Endothelial cell of umbilical vein (primary cell): ENCODE measurements at regions of chrX and their contacts with region 1.

Region 1: DNA sequence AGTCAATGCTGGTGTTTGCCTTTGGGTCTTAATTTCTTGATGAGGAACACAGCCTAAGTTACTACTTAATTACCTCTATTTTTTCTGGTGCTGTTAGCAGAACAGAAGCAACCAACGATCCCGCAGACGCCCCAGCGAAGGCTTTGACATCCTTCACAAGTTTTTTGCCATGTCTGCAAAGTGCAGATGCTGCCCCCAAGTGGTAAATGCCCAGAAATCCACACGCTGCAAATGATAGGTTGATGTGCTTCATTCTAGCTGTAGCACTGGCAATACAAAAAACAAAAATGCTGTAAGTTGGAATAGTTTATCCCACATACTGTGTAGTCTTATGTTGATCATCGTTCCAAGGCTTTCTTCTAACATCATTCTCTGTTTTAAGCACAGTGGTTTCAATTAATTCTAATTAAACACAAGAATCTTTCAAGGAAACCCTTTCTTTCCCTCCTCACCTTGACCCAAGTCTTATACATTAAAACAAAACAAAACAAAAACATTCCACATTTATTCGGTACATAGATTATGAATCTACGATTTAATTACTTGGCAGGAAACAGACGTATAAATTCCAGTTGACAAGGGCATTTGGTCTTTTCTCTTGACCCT is 1.2 kb downstream of the PNPLA4 start:
- DNase-seq: peak; percentile 51
- H3K4me3 ChIP-seq: no peak overlapping the region
- H3K27ac ChIP-seq: no peak overlapping the region
- H3K4me1 ChIP-seq: peaks cover 5% of the 10 kb centered on the region
- H3K27me3 ChIP-seq: no peaks in the 10 kb centered on the region
- CTCF ChIP-seq: peak; percentile 56 to 65
- POLR2A ChIP-seq: no peak

Region 2: DNA sequence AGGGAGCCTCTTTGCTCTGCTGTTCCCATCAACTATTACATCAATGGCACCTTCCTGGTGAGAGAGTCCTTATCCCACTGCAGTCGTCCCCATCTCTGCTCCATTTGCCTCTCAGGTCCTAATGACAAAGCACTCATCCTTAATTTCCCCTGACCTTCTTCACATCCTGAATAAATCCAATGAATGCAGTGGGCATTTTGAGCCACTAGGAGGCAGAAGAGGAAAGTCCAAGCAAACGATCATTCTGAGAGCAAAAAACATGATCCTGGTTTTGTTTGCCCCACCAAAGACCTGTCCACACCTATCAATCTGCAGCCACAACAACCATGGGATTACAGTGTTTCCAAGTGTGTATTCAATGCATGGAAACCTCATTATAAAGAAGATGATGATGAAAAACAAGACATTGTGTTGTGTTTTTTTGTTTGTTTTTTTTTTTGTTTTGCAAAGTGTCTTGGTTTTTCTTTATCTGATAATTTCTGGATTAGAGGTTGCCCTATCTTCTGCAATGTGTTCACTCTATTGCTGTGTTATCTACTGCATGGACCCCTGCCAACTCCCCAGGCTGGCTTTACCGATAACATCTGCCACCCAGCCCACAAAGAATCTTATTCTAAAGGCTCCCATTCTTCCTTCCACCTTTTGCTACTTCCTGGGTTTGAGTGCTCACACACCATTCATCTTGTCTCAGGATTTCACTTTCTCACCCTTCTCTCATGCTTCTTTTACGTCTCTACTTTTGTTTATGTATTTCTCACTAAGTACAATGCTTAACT is 1904.5 kb before region 1 on chrX:
- CTCF ChIA-PET with region 1: no interaction called
- POLR2A ChIA-PET with region 1: no interaction called
- dilution Hi-C with region 1: no loop called
- intact Hi-C with region 1: loop called (anchors 2 kb)
- DNase-seq: no peak
- H3K4me3 ChIP-seq: no peak overlapping the region
- H3K27ac ChIP-seq: no peak overlapping the region
- H3K4me1 ChIP-seq: no peaks in the 10 kb centered on the region
- H3K27me3 ChIP-seq: no peaks in the 10 kb centered on the region
- CTCF ChIP-seq: peak in 1 of 2 donors; percentile 13
- POLR2A ChIP-seq: no peak

Region 3: DNA sequence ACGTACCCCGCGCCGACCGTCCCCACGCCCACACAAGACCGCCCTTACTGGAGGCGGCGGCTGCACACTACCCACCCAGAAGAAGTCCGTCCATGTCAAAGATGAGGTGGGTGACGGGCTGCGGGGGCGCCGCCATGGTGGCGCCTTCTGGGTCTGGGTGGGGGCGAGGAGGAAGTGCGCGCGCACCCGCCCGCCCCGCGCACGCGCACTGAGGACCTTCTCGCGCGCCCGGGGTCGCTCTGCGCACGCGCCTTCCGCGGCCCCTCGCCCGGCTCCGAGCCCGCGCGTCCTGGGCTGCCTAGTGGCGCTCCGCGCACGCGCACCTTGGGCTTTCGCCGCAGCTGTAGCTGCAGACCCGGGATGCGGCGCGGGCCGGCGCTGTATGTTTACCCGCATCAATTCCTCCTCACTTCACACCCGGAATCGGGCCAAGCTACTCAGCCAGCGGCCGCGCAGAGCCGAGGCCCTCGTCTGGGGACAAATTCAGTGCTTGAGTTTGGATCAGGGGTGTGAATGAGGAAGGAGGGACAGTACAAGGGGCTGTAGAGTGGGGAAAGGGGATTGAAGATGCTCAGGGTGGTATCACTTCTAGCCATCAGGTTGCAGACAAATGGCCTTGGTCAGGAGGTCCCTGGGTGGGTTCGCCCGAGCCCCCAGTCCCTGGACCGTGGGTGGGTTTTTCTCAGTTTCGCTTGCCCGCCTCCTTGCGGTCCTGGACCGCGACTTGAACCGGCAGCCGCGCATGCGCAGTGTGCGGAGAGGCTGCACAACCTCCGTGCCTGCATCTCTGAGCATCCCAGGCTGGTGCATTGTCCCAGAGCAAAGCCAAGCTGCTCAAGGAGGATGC is 777.8 kb before region 1 on chrX and contains the start of gene PUDP:
- CTCF ChIA-PET with region 1: no interaction called
- POLR2A ChIA-PET with region 1: no interaction called
- dilution Hi-C with region 1: no loop called
- intact Hi-C with region 1: loop called (anchors 1 kb)
- DNase-seq: peak; percentile 77
- H3K4me3 ChIP-seq: peak within 1 kb of the TSS; percentile 25 to 86 (median 67)
- H3K27ac ChIP-seq: peak within 1 kb of the TSS; percentile 58
- H3K4me1 ChIP-seq: no peaks in the 10 kb centered on the region
- H3K27me3 ChIP-seq: no peaks in the 10 kb centered on the region
- CTCF ChIP-seq: peak in 1 of 2 donors; percentile 39
- POLR2A ChIP-seq: peak; percentile 64
- total RNA-seq, gene PUDP: 22.5 and 24.5 TPM in 2 replicates

Region 4: DNA sequence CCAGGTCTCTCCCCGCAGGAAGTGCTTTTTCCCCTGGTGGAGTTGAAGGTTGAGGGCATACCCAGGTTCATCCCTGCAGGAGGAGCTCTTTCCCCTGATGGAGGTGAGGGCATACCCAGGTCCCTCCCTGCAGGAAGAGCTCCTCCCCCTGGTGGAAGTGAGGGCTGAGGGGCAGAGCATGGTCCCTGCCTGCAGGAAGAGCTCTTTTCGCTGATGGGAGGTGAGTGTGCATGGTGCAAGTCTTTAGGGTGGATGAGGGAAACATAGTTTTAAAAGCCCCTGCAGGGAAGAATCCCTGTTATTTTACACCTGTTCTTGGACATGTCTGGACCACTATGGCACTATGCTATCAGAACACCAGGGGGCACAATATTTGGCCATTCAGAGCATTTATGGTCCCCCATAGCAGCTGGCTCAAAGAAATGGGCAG is 734.3 kb before region 1 on chrX:
- CTCF ChIA-PET with region 1: no interaction called
- POLR2A ChIA-PET with region 1: no interaction called
- dilution Hi-C with region 1: no loop called
- intact Hi-C with region 1: loop called (anchors 2 kb)
- DNase-seq: no peak
- H3K4me3 ChIP-seq: no peak overlapping the region
- H3K27ac ChIP-seq: no peak overlapping the region
- H3K4me1 ChIP-seq: no peaks in the 10 kb centered on the region
- H3K27me3 ChIP-seq: no peaks in the 10 kb centered on the region
- CTCF ChIP-seq: no peak
- POLR2A ChIP-seq: no peak